Ovary (tissue), 10 donors: ENCODE measurements at regions of chr17 and their contacts with region 1.

Region 1: GRCh38 chr17:2847381-2848333 is 51.4 kb downstream of the RAP1GAP2 start:
- DNase-seq: no peak
- H3K4me3 ChIP-seq: no peak overlapping the region
- H3K27ac ChIP-seq: no peak overlapping the region
- H3K4me1 ChIP-seq: no peaks in the 10 kb centered on the region
- H3K27me3 ChIP-seq: no peaks in the 10 kb centered on the region
- CTCF ChIP-seq: no peak
- EP300 ChIP-seq: no peak
- POLR2A ChIP-seq: no peak

Region 2: DNA sequence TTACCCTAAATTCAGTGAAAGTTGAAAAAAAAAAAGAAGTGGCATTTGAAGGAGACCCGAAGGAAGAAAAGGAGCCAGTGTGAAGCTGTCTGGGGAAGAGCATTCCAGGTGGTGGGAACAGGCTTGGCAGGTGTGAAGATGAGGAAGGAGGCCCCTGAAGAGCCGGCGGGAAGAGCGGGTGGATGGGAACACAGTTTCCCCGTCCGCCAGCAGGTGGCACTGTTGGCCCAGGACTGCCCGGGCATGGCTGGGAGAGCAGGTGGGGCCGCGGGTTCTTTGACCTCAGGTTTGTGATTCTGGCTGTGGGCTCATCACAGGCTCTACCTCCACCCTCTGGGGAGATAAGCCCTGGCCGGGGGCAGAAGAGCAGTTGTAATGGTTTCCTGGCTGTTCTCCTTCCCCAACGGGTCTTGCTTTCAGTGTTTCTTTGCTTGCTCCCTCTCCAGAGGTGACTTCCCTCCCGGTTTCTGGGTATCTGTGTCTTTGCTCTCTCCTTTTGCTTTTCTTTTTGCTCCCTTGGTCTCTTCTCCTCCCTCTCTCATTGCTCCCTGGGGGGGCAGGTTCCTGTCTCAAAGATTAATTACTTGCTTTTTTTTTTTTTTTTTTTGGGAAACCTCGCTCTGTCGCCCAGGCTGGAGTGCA is 19.1 kb before region 1 on chr17:
- intact Hi-C with region 1: no loop called
- DNase-seq: peak; percentile 52 to 82 (median 67)
- H3K4me3 ChIP-seq: no peak overlapping the region
- H3K27ac ChIP-seq: no peak overlapping the region
- H3K4me1 ChIP-seq: peaks cover 2% of the 10 kb centered on the region
- H3K27me3 ChIP-seq: no peaks in the 10 kb centered on the region
- CTCF ChIP-seq: peak; percentile 59 to 80 (median 74)
- EP300 ChIP-seq: no peak
- POLR2A ChIP-seq: no peak

Region 3: DNA sequence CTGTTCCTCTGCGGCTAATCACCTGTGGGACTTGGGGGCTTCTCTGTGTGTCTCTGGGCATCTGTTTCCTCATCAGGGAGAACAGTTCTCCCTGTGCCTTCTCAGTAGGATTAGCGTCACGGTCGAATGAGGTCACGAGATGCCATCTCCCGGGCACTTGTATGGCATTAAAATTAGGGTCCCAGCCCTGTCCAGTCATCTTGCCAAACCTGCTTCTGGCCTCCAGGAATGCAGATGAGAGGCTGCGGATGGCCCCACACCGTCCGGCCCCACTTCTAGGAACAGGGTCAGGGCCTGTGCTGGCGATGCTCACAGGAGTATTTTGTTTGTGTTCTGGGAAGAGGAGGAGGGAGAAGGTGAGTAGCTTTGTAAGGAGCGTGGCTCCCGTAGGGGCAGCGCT is 157.3 kb after region 1 on chr17:
- intact Hi-C with region 1: loop called in 2 of 4 experiments (anchors 5 to 10 kb)
- DNase-seq: peak in 2 of 5 donors; percentile 43
- H3K4me3 ChIP-seq: no peak overlapping the region
- H3K27ac ChIP-seq: peak overlapping the region; percentile 58 to 93
- H3K4me1 ChIP-seq: peaks cover 11% of the 10 kb centered on the region
- H3K27me3 ChIP-seq: no peaks in the 10 kb centered on the region
- CTCF ChIP-seq: no peak
- EP300 ChIP-seq: no peak
- POLR2A ChIP-seq: no peak